H1 (cell line): ENCODE measurements at regions of chr11 and their contacts with region 1.

Region 1: GRCh38 chr11:68271781-68272608 is at the start of gene C11orf24:
- DNase-seq: peak; percentile 77 to 95
- H3K4me3 ChIP-seq: peak within 1 kb of the TSS; percentile 85 to 99 (median 96)
- H3K27ac ChIP-seq: peak within 1 kb of the TSS; percentile 86
- H3K4me1 ChIP-seq: peaks cover 0 to 5% (median 1%) of the 10 kb centered on the region in 4 experiments; a peak in 4 of 7 replicates
- H3K27me3 ChIP-seq: no peaks in the 10 kb centered on the region
- CTCF ChIP-seq: peak in 1 of 3 experiments; percentile 10; a peak in 1 of 4 replicates
- EP300 ChIP-seq: peak in 1 of 2 experiments; percentile 58; a peak in 1 of 3 replicates
- POLR2A ChIP-seq: peak; percentile 80 to 85
- RAD21 ChIP-seq: no peak
- total RNA-seq, gene C11orf24: 45.3 and 45.4 TPM in 2 replicates

Region 2: GRCh38 chr11:68257475-68258362 is 14.3 kb before region 1 on chr11:
- CTCF ChIA-PET with region 1: interaction called, 23 read pairs
- POLR2A ChIA-PET with region 1: interaction called, 22 read pairs
- DNase-seq: peak; percentile 93 to 99
- H3K4me3 ChIP-seq: no peak overlapping the region
- H3K27ac ChIP-seq: no peak overlapping the region
- H3K4me1 ChIP-seq: peaks cover 0 to 10% (median 4%) of the 10 kb centered on the region in 4 experiments; a peak in 5 of 7 replicates
- H3K27me3 ChIP-seq: peaks cover 0 to 11% (median 4%) of the 10 kb centered on the region in 4 experiments; a peak in 2 of 7 replicates
- CTCF ChIP-seq: peak; percentile 65 to 84 (median 83)
- EP300 ChIP-seq: no peak
- POLR2A ChIP-seq: no peak
- RAD21 ChIP-seq: peak; percentile 84 to 86

Region 3: DNA sequence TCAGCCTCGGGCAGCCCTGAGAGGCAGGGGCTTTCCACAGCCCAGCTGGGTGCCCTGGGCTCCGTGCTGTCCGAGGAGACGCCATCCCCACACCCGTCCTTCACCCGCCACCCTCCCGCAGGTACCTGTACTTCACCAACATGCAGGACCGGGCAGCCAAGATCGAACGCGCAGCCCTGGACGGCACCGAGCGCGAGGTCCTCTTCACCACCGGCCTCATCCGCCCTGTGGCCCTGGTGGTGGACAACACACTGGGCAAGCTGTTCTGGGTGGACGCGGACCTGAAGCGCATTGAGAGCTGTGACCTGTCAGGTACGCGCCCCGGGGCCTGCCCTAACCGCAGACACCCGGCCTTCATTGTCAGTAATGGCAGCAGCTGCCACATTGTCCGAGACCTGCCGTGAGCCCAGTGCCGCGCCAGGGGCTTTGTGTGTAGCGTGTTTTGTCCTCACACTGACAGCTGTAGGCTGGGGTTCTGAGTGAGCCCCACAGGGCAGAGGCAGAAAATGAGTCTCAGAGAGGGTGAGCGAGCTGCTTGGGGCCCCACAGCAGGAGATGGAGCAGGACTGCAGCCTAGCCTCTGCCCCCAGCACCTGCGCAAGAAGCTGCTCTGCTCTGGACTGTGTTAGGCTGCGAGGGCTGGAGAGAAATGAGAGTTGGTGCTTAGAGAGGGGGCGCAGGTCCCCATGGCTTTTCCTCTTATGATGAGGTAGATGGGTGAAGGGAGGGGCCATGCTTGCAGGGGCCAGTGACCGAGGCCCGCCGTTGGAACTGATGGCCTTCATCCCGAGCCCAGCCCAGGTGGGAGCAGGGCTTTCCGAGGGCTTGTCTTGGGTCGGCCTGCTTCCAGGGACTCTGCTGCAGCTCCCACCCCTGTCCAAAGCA is 153.2 kb after region 1 on chr11:
- CTCF ChIA-PET with region 1: no interaction called
- POLR2A ChIA-PET with region 1: no interaction called
- DNase-seq: no peak
- H3K4me3 ChIP-seq: no peak overlapping the region
- H3K27ac ChIP-seq: no peak overlapping the region
- H3K4me1 ChIP-seq: no peaks in the 10 kb centered on the region
- H3K27me3 ChIP-seq: no peaks in the 10 kb centered on the region
- CTCF ChIP-seq: no peak
- EP300 ChIP-seq: no peak
- POLR2A ChIP-seq: no peak
- RAD21 ChIP-seq: no peak